ENCODE measurements at regions of chr7 and their contacts with region 1.

Region 1: GRCh38 chr7:54729107-54729506 is 29.9 kb downstream of the SEC61G start:
- DNase-seq: no peak
- H3K4me3 ChIP-seq: no peak overlapping the region
- H3K27ac ChIP-seq: no peak overlapping the region
- H3K4me1 ChIP-seq: no peaks in the 10 kb centered on the region
- H3K27me3 ChIP-seq: no peaks in the 10 kb centered on the region
- CTCF ChIP-seq: no peak
- EP300 ChIP-seq: no peak
- POLR2A ChIP-seq: no peak

Region 2: GRCh38 chr7:52811537-52811936 is 1917.6 kb before region 1 on chr7:
- in situ Hi-C with region 1: no loop called
- intact Hi-C with region 1: loop called (anchors 5 kb)
- DNase-seq: no peak
- H3K4me3 ChIP-seq: no peak overlapping the region
- H3K27ac ChIP-seq: no peak overlapping the region
- H3K4me1 ChIP-seq: no peaks in the 10 kb centered on the region
- H3K27me3 ChIP-seq: no peaks in the 10 kb centered on the region
- CTCF ChIP-seq: no peak
- EP300 ChIP-seq: no peak
- POLR2A ChIP-seq: no peak

Region 3: GRCh38 chr7:54354436-54354835 is 374.7 kb before region 1 on chr7:
- in situ Hi-C with region 1: no loop called
- intact Hi-C with region 1: no loop called
- DNase-seq: no peak
- H3K4me3 ChIP-seq: no peak overlapping the region
- H3K27ac ChIP-seq: no peak overlapping the region
- H3K4me1 ChIP-seq: no peaks in the 10 kb centered on the region
- H3K27me3 ChIP-seq: no peaks in the 10 kb centered on the region
- CTCF ChIP-seq: no peak
- EP300 ChIP-seq: no peak
- POLR2A ChIP-seq: no peak

Region 4: GRCh38 chr7:54390565-54390964 is 338.5 kb before region 1 on chr7:
- in situ Hi-C with region 1: no loop called
- intact Hi-C with region 1: no loop called
- DNase-seq: no peak
- H3K4me3 ChIP-seq: no peak overlapping the region
- H3K27ac ChIP-seq: no peak overlapping the region
- H3K4me1 ChIP-seq: no peaks in the 10 kb centered on the region
- H3K27me3 ChIP-seq: no peaks in the 10 kb centered on the region
- CTCF ChIP-seq: no peak
- EP300 ChIP-seq: no peak
- POLR2A ChIP-seq: no peak

Region 5: GRCh38 chr7:54758702-54759592 is 29.8 kb after region 1 on chr7 and contains the start of gene SEC61G:
- in situ Hi-C with region 1: no loop called
- intact Hi-C with region 1: no loop called
- DNase-seq: peak; percentile 98
- H3K4me3 ChIP-seq: peak within 1 kb of the TSS; percentile 68 to 97 (median 94)
- H3K27ac ChIP-seq: peak within 1 kb of the TSS; percentile 86 to 91 (median 90)
- H3K4me1 ChIP-seq: peaks cover 6 to 35% (median 31%) of the 10 kb centered on the region in 4 donors
- H3K27me3 ChIP-seq: no peaks in the 10 kb centered on the region
- CTCF ChIP-seq: peak in 1 of 5 experiments; percentile 8
- EP300 ChIP-seq: no peak
- POLR2A ChIP-seq: peak; percentile 89
- total RNA-seq, gene SEC61G: 33.6 to 247 (median 134) TPM

Measured in transverse colon (tissue), 4 donors.